ENCODE measurements at regions of chr16 and their contacts with region 1.

Region 1: DNA sequence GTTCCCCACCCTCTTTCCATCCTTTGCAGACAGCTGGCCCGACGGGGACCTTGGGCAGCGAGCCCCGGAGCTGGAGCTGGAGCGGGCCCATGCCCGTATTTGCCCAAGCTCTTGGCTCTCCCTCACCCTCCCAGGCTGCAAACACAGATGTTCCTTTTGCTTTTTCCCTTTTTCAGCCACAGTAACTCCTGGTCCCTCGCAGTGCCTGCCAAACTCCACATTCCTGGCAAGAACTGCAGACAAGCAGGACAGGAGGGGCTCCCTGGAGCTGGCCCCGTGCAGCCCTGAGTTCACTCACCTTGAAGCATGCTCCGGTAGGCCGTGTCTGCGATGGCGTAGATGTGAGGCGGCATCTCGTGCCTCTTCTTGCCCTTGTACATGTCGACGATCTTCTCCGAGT is 33.9 kb downstream of the MYH11 start:
- DNase-seq: no peak
- H3K4me3 ChIP-seq: no peak overlapping the region
- CTCF ChIP-seq: no peak

Region 2: GRCh38 chr16:15777533-15778203 is 45.3 kb before region 1 on chr16:
- CTCF ChIA-PET with region 1: interaction called, 35 read pairs
- POLR2A ChIA-PET with region 1: no interaction called
- DNase-seq: no peak
- H3K4me3 ChIP-seq: no peak overlapping the region
- CTCF ChIP-seq: peak; percentile 50

Region 3: GRCh38 chr16:15799851-15800495 is 23.0 kb before region 1 on chr16:
- CTCF ChIA-PET with region 1: interaction called, 13 read pairs
- POLR2A ChIA-PET with region 1: no interaction called
- DNase-seq: no peak
- H3K4me3 ChIP-seq: no peak overlapping the region
- CTCF ChIP-seq: no peak

Region 4: GRCh38 chr16:15835136-15835878 is 12.3 kb after region 1 on chr16:
- CTCF ChIA-PET with region 1: interaction called, 29 read pairs
- POLR2A ChIA-PET with region 1: no interaction called
- DNase-seq: no peak
- H3K4me3 ChIP-seq: no peak overlapping the region
- CTCF ChIP-seq: no peak